Activated CD4-positive, alpha-beta memory T cell treated with anti-CD3 and anti-CD28 coated beads for 36 hours (primary cell): ENCODE measurements at regions of chr10 and their contacts with region 1.

Region 1: DNA sequence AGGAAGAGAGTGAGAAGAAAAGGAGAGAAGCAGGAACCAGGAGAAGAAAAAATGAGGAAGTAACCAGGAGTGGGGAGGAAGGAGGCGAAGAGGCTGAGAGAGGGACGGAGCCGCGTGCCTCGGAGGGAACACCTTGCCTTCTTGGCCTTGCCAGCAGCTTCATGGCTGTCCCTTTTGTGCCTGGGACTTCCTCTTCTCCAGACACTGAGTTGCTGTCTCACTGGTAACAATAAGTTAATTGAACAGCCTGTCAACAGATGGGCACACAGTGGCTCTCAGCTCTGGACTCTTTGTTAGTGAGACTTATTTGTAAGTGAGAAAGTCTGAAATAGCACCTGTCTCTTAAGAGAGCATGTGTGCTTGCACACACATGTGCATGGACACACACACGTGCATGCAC is 83.2 kb downstream of the GATA3 start:
- DNase-seq: peak; percentile 43
- H3K4me3 Mint-ChIP-seq: peak overlapping the region; percentile 59
- H3K27ac Mint-ChIP-seq: peak overlapping the region; percentile 86
- H3K4me1 Mint-ChIP-seq: peaks cover 57% of the 10 kb centered on the region
- H3K27me3 Mint-ChIP-seq: peaks cover 4% of the 10 kb centered on the region

Region 2: DNA sequence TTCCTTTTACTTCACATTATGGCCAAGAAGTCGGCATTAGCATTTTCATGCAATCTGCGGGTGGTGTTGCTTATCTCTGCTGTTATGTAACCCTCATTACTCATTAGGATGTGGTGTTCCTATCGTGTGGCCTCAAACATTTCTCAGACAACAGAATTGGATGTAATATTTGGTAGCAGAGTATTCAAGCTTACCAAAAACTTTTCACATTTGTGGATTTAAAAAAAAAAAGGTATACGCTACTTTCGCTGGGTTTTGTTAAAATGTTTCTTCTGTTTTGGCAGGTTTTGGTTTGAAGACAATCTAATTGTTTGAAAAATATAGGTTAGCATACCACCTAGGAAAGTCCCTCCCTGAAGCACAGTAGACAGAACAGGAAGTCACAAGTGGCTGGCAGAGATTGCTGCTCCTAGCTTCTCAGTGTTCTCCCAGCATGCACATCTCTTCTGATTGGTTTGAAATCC is 45.5 kb after region 1 on chr10:
- CTCF ChIA-PET with region 1: no interaction called
- POLR2A ChIA-PET with region 1: no interaction called
- intact Hi-C with region 1: loop called (anchors 1 kb)
- DNase-seq: peak; percentile 36
- H3K4me3 Mint-ChIP-seq: peak overlapping the region; percentile 0
- H3K27ac Mint-ChIP-seq: peak overlapping the region; percentile 47
- H3K4me1 Mint-ChIP-seq: peaks cover 23% of the 10 kb centered on the region
- H3K27me3 Mint-ChIP-seq: peaks cover 2% of the 10 kb centered on the region

Region 3: DNA sequence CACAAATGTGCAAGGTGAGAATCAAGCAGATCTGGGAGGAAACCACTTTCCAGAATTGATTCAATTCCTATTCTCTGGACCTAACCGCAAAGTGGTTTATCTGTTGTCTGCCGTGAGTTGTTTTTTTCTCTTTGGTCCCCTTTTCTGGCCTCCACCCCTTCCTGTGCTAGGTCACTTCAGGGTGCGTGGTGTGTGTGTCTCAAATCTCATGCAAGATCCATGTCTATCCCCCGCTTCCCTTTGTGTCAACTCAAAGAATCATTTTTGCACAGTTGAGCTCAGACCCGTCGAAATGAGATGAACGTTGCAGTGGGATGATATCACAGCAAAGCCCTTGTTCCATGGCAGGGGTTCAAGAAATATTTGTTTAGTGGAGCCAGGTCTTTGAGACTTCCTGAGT is 101.3 kb after region 1 on chr10:
- CTCF ChIA-PET with region 1: no interaction called
- POLR2A ChIA-PET with region 1: interaction called, 4 read pairs
- intact Hi-C with region 1: loop called (anchors 1 kb)
- DNase-seq: peak; percentile 72
- H3K4me3 Mint-ChIP-seq: peak overlapping the region; percentile 2
- H3K27ac Mint-ChIP-seq: peak overlapping the region; percentile 23
- H3K4me1 Mint-ChIP-seq: peaks cover 54% of the 10 kb centered on the region
- H3K27me3 Mint-ChIP-seq: no peaks in the 10 kb centered on the region

Region 4: GRCh38 chr10:8306685-8307364 is 169.1 kb after region 1 on chr10:
- CTCF ChIA-PET with region 1: no interaction called
- POLR2A ChIA-PET with region 1: no interaction called
- intact Hi-C with region 1: loop called (anchors 2 kb)
- DNase-seq: no peak
- H3K4me3 Mint-ChIP-seq: no peak overlapping the region
- H3K27ac Mint-ChIP-seq: no peak overlapping the region
- H3K4me1 Mint-ChIP-seq: peaks cover 21% of the 10 kb centered on the region
- H3K27me3 Mint-ChIP-seq: peaks cover 2% of the 10 kb centered on the region

Region 5: DNA sequence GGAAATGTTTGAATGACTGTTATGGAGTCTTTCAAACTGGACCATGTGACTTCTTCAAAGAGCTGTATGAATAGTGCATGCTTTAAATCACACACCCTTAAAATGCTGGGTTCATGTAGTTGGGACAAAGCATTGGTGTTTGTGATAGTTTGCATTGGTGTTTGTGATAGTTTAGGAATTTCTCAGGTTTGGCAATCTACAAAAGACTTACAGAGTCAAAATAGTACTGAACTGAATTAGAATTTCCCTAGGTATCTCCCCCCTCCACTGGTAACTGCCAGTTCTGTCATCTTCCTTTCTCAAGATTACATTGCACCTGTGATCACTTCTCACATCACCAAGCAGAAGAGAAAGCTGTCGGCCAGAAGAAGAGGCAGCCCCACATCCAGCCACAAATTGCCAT is 177.9 kb after region 1 on chr10:
- CTCF ChIA-PET with region 1: interaction called, 6 read pairs
- POLR2A ChIA-PET with region 1: no interaction called
- intact Hi-C with region 1: loop called (anchors 2 kb)
- DNase-seq: peak; percentile 51
- H3K4me3 Mint-ChIP-seq: no peak overlapping the region
- H3K27ac Mint-ChIP-seq: peak overlapping the region; percentile 85
- H3K4me1 Mint-ChIP-seq: peaks cover 41% of the 10 kb centered on the region
- H3K27me3 Mint-ChIP-seq: peaks cover 4% of the 10 kb centered on the region